Breast epithelium (tissue), 4 donors: ENCODE measurements at regions of chr2 and their contacts with region 1.

Region 1: DNA sequence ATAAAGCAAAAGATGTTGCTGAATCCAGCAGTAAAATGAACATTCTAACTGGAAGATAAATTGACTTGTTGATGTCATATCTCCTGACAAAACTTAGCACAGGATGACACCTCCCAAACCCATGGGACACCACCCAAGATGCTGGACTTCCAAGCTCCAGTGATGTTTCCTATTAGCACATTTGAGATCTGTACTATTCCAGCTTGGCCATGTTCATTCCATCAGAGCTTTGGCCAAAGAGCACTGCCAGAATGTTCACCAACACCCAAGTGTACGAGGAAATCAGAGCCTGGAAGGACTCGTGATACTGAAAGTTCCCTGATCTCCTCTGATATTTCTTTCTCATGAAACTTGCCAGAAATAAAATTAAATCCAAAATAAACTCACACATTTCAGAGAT is 44.7 kb downstream of the PID1 start:
- DNase-seq: no peak
- H3K4me3 ChIP-seq: no peak overlapping the region
- H3K27ac ChIP-seq: peak overlapping the region in 1 of 2 donors; percentile 27
- H3K4me1 ChIP-seq: no peaks in the 10 kb centered on the region
- H3K27me3 ChIP-seq: no peaks in the 10 kb centered on the region
- CTCF ChIP-seq: no peak
- POLR2A ChIP-seq: no peak

Region 2: DNA sequence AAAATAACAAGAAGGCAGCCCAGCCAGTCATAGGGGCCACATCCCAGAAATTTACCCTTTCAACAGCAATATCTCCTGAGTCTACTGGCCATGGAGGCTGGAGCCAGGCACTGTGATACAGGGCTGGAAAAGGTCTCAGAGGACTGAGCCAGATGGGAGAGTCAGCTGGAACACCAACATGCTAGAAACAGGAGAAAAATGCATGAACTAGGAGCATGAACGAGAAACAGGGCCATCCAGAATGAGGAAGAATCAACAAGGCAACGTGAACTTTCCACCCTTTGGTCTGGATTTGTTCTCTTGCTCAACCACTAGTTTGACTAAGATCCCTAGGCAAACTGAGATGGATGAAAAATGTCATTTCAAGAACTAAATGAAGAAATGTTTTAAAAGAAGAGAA is 31.6 kb after region 1 on chr2:
- intact Hi-C with region 1: loop called (anchors 2 kb)
- DNase-seq: no peak
- H3K4me3 ChIP-seq: no peak overlapping the region
- H3K27ac ChIP-seq: peak overlapping the region in 1 of 2 donors; percentile 32
- H3K4me1 ChIP-seq: no peaks in the 10 kb centered on the region
- H3K27me3 ChIP-seq: no peaks in the 10 kb centered on the region
- CTCF ChIP-seq: no peak
- POLR2A ChIP-seq: no peak

Region 3: GRCh38 chr2:229363185-229363814 is 136.9 kb after region 1 on chr2:
- intact Hi-C with region 1: no loop called
- DNase-seq: no peak
- H3K4me3 ChIP-seq: no peak overlapping the region
- H3K27ac ChIP-seq: peak overlapping the region in 1 of 2 donors; percentile 63
- H3K4me1 ChIP-seq: no peaks in the 10 kb centered on the region
- H3K27me3 ChIP-seq: no peaks in the 10 kb centered on the region
- CTCF ChIP-seq: no peak
- POLR2A ChIP-seq: no peak